Right ventricle myocardium inferior (tissue), 1 donor: ENCODE measurements at regions of chr13 and their contacts with region 1.

Region 1: DNA sequence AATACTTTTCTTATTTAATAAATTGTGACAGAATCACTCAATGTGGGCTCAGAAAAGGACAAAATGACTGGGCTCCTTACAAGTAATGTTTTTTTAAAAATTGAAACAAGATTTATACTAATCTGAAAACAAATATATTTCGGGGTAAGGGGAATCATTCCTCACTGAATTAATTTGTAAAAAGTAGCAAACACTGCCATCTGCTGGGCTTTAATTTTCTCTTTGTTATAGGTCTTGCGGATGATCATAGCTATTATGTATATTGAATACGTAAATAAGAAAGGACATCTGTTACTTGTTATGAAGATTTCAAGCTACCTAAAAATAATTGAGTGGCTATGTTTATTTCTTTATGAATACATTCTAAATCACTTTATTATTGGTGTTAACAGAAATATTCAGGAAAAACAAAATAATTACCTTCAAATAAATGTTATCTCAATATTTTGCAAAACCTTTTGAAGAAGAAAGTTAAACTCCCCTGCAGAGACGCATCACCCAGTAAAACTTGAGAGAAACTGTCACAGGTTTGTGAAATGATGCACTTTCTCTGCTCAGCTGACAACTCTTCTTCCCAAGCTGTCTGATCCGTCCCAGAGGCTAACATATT is 17.8 kb upstream of the ENOX1 start:
- DNase-seq: no peak
- ATAC-seq: no peak

Region 2: GRCh38 chr13:42594970-42595571 is 1209.5 kb before region 1 on chr13:
- intact Hi-C with region 1: loop called (anchors 10 kb)
- DNase-seq: no peak
- ATAC-seq: peak; percentile 56

Region 3: GRCh38 chr13:43085545-43085944 is 719.0 kb before region 1 on chr13:
- intact Hi-C with region 1: loop called (anchors 5 kb)
- DNase-seq: no peak
- ATAC-seq: no peak

Region 4: GRCh38 chr13:43196086-43196621 is 608.4 kb before region 1 on chr13:
- intact Hi-C with region 1: loop called (anchors 10 kb)
- DNase-seq: peak; percentile 68
- ATAC-seq: peak; percentile 84

Region 5: GRCh38 chr13:43303033-43303729 is 501.4 kb before region 1 on chr13:
- intact Hi-C with region 1: loop called (anchors 1 kb)
- DNase-seq: no peak
- ATAC-seq: peak; percentile 86

Region 6: DNA sequence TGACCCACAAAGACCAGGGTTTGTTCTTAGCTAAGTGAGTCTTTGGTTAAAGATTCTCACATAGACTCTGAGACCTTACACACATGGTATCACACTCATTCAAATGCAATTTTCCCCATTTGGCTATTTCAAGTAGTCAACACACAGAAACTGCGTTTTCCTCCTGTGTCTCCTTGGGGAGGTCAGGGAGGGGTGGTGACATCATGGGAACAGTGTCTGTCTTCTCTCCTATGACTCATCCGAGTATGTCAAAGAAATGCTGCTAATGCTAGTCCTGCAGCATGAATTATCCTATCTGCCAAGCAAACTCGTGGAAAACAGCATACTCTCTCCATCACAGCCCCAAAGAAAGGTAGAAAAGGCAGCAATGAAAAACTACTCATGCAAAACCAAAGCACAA is 118.0 kb before region 1 on chr13:
- intact Hi-C with region 1: no loop called
- DNase-seq: no peak
- ATAC-seq: peak; percentile 80